IMR-90 (cell line): ENCODE measurements at regions of chr9 and their contacts with region 1.

Region 1: DNA sequence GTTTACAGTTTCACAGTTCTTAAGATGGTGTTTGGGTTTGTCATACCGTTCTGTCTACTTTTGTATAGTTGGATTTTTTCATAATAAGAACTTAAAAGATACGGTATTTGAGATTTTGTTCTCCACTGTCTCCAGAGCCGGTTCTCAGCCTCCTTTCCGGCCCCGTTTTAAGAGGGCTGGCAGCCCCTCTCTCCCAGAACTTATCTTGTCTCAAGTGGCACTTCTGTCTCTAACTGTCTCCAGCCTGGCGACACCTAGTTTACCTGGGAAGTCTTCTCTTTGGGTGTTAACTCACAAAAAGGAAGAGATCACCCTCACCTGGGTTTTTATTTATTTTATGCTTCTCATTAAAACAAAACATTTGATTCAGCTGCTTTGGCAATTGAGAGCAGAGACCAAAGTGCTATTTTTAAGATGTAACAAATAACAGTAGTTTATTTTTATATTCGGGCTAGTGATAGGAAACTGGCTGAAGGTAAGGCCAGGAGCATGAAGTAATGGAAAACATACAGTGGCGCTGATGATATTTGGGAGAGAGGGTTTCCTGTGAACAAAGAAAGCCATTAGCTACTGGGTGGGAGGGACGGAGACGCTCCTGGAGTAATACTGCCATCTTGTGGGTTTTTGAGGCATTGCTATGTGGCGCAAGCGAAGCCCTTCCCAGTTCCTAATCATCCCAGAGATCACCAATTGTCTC is 48.3 kb downstream of the ACER2 start:
- DNase-seq: peak; percentile 75
- ATAC-seq: peak; percentile 98
- H3K4me3 ChIP-seq: peak overlapping the region; percentile 24; the same call in 1 of the 2 replicates
- H3K27ac ChIP-seq: no peak overlapping the region
- H3K4me1 ChIP-seq: no peaks in the 10 kb centered on the region
- H3K27me3 ChIP-seq: 0 out of 2 replicates have a peak, but pooled peaks cover 2% of the 10 kb centered on the region
- CTCF ChIP-seq: peak; percentile 93
- POLR2A ChIP-seq: no peak
- RAD21 ChIP-seq: peak; percentile 94

Region 2: DNA sequence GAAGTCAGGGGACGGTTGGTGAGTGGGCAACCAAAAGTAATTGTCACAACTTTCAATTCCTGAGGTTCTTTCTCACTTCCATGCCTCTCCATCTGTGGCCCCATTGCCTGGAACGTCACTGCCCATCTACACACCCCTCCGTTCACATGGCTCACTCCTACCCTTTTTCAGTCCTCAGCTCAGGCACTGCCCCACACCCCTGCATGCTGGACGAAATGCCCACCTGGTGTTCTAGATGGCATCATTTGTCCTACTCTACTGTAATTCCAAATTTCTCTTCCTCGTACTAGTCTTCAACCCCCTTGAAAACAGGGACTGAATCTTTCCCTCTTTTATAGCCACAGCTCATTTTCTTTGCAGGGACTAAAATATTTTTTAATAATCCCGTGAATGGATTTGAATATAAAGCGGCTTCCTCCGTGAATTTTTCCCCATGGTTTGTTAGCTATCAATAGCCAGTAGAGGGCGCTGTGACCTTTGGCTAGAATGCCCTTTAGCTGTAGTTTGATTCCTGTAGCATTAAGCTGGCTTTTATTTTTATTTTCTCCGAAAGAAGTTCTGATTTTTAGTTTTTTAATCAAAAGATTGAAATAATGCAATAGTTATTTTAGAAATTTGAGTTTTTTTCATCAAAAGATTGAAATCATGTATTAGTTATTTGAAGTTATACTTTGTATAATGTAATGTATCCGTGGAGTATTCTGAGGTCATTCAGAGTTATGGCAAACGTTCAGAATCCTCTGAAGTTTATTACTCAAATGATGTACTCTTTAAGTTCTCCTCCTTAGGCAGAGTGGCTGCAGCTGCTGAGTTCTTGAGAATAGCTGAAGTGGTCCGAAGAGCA is 1646.2 kb before region 1 on chr9:
- CTCF ChIA-PET with region 1: no interaction called
- POLR2A ChIA-PET with region 1: no interaction called
- dilution Hi-C with region 1: no loop called
- in situ Hi-C with region 1: no loop called
- intact Hi-C with region 1: loop called (anchors 2 kb)
- DNase-seq: peak; percentile 66
- ATAC-seq: peak; percentile 87
- H3K4me3 ChIP-seq: no peak overlapping the region
- H3K27ac ChIP-seq: no peak overlapping the region
- H3K4me1 ChIP-seq: no peaks in the 10 kb centered on the region
- H3K27me3 ChIP-seq: peaks cover 3% of the 10 kb centered on the region
- CTCF ChIP-seq: peak; percentile 91
- POLR2A ChIP-seq: no peak
- RAD21 ChIP-seq: peak; percentile 91

Region 3: GRCh38 chr9:18442629-18443491 is 1014.3 kb before region 1 on chr9:
- CTCF ChIA-PET with region 1: no interaction called
- POLR2A ChIA-PET with region 1: no interaction called
- dilution Hi-C with region 1: no loop called
- in situ Hi-C with region 1: no loop called
- intact Hi-C with region 1: loop called (anchors 5 kb)
- DNase-seq: peak; percentile 87
- ATAC-seq: peak; percentile 71
- H3K4me3 ChIP-seq: no peak overlapping the region
- H3K27ac ChIP-seq: no peak overlapping the region
- H3K4me1 ChIP-seq: peaks cover 10% of the 10 kb centered on the region
- H3K27me3 ChIP-seq: no peaks in the 10 kb centered on the region
- CTCF ChIP-seq: peak; percentile 92
- POLR2A ChIP-seq: no peak
- RAD21 ChIP-seq: peak; percentile 79

Region 4: GRCh38 chr9:19048966-19049916 is 407.9 kb before region 1 on chr9 and contains the start of gene RRAGA:
- CTCF ChIA-PET with region 1: no interaction called
- POLR2A ChIA-PET with region 1: no interaction called
- dilution Hi-C with region 1: no loop called
- in situ Hi-C with region 1: no loop called
- intact Hi-C with region 1: loop called (anchors 1 kb)
- DNase-seq: peak; percentile 96
- ATAC-seq: peak; percentile 93
- H3K4me3 ChIP-seq: peak within 1 kb of the TSS; percentile 74
- H3K27ac ChIP-seq: peak within 1 kb of the TSS; percentile 96
- H3K4me1 ChIP-seq: peaks cover 2% of the 10 kb centered on the region; the same call in 1 of the 2 replicates
- H3K27me3 ChIP-seq: no peaks in the 10 kb centered on the region
- CTCF ChIP-seq: peak; percentile 89
- POLR2A ChIP-seq: peak; percentile 97
- RAD21 ChIP-seq: peak; percentile 62
- total RNA-seq, gene RRAGA: 63.3 and 74.7 TPM in 2 replicates

Region 5: GRCh38 chr9:19127881-19128500 is 329.2 kb before region 1 on chr9:
- CTCF ChIA-PET with region 1: no interaction called
- POLR2A ChIA-PET with region 1: no interaction called
- dilution Hi-C with region 1: no loop called
- in situ Hi-C with region 1: no loop called
- intact Hi-C with region 1: loop called (anchors 10 kb)
- DNase-seq: no peak
- ATAC-seq: peak; percentile 27
- H3K4me3 ChIP-seq: peak overlapping the region; percentile 65
- H3K27ac ChIP-seq: peak overlapping the region; percentile 72
- H3K4me1 ChIP-seq: peaks cover 16% of the 10 kb centered on the region
- H3K27me3 ChIP-seq: no peaks in the 10 kb centered on the region
- CTCF ChIP-seq: no peak
- POLR2A ChIP-seq: no peak
- RAD21 ChIP-seq: no peak

Region 6: GRCh38 chr9:19230356-19231125 is 226.6 kb before region 1 on chr9 and contains the start of gene DENND4C:
- CTCF ChIA-PET with region 1: no interaction called
- POLR2A ChIA-PET with region 1: no interaction called
- dilution Hi-C with region 1: no loop called
- in situ Hi-C with region 1: no loop called
- intact Hi-C with region 1: loop called (anchors 2 kb)
- DNase-seq: peak; percentile 78
- ATAC-seq: peak; percentile 92
- H3K4me3 ChIP-seq: peak within 1 kb of the TSS; percentile 97
- H3K27ac ChIP-seq: peak within 1 kb of the TSS; percentile 97
- H3K4me1 ChIP-seq: peaks cover 3% of the 10 kb centered on the region
- H3K27me3 ChIP-seq: no peaks in the 10 kb centered on the region
- CTCF ChIP-seq: peak; percentile 22; the same call in 1 of the 2 replicates
- POLR2A ChIP-seq: peak; percentile 81
- RAD21 ChIP-seq: no peak
- total RNA-seq, gene DENND4C: 32.6 and 48.0 TPM in 2 replicates

Region 7: DNA sequence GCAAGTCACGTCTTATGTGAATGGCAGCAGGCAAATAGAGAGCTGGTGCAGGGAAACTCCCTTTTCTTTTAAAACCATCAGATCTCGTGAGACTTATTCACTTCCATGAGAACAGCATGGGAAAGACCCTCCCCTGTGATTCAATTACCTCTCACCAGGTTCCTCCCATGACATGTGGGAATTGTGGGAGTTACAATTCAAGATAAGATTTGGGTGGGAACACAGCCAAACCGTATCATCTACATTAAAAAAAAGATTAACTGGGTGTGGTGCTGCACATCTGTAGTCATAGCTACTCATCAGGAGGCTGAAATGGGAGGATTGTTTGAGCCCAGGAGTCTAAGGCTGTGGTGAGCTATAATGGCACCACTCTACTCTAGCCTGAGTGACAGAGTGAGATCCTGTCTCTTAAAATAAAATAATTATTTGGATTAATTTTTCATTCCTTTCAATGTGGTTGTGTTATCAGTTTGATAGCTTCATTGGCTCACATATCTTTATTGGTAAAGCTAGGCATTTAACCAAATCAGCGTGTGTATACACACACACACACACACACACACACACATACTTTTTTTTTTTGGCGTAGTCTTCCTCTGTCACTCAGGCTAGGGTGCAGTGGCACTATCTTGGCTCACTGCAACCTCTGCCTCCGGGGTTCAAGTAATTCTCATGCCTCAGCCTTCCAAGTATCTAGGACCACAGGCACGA is 204.8 kb before region 1 on chr9:
- CTCF ChIA-PET with region 1: no interaction called
- POLR2A ChIA-PET with region 1: no interaction called
- dilution Hi-C with region 1: no loop called
- in situ Hi-C with region 1: no loop called
- intact Hi-C with region 1: no loop called
- DNase-seq: no peak
- ATAC-seq: no peak
- H3K4me3 ChIP-seq: no peak overlapping the region
- H3K27ac ChIP-seq: no peak overlapping the region
- H3K4me1 ChIP-seq: no peaks in the 10 kb centered on the region
- H3K27me3 ChIP-seq: no peaks in the 10 kb centered on the region
- CTCF ChIP-seq: no peak
- POLR2A ChIP-seq: no peak
- RAD21 ChIP-seq: no peak

Region 8: DNA sequence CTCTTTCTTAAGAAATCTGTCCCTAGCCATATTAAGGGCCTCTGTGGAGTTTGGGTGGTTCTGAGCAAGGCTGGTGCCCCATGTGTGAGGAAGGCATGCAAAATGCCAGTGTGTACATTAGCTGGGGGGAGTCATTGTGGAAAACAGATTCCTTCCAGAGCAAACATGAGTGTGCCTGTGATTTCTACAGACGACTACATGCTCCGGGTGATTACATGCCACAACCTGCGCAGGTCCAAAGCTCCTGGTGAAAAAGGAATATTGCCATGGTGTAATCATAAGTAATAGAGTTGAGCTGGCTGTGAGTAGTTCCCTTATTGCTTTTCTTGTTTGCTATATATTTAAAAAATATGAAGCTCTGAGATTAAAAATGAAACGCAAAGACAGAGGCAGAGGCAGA is 53.8 kb after region 1 on chr9:
- CTCF ChIA-PET with region 1: no interaction called
- POLR2A ChIA-PET with region 1: no interaction called
- dilution Hi-C with region 1: no loop called
- in situ Hi-C with region 1: no loop called
- intact Hi-C with region 1: no loop called
- DNase-seq: no peak
- ATAC-seq: no peak
- H3K4me3 ChIP-seq: no peak overlapping the region
- H3K27ac ChIP-seq: no peak overlapping the region
- H3K4me1 ChIP-seq: no peaks in the 10 kb centered on the region
- H3K27me3 ChIP-seq: 0 out of 2 replicates have a peak, but pooled peaks cover 2% of the 10 kb centered on the region
- CTCF ChIP-seq: no peak
- POLR2A ChIP-seq: no peak
- RAD21 ChIP-seq: no peak

Region 9: DNA sequence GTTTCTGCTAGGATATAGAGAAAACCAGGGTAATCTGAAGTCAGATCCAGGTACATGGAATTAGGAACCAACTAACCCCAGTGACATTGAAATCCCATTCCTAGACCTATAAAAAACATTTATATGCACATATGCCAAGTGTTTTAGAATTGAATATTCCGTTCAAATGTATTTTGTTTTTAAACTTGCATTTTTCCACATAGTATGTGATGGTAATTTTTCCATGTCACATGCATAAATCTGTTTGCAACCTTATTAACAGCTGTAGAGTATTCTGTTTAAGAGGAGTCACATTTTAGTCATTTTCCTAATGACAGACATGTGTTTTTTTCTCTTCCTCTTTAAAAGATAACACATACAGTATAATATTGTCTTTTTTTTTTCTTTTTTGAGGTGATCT is 1277.1 kb after region 1 on chr9:
- CTCF ChIA-PET with region 1: interaction called, 10 read pairs
- POLR2A ChIA-PET with region 1: no interaction called
- dilution Hi-C with region 1: no loop called
- in situ Hi-C with region 1: no loop called
- intact Hi-C with region 1: no loop called
- DNase-seq: no peak
- ATAC-seq: no peak
- H3K4me3 ChIP-seq: no peak overlapping the region
- H3K27ac ChIP-seq: no peak overlapping the region
- H3K4me1 ChIP-seq: no peaks in the 10 kb centered on the region; the same call in 1 of the 2 replicates
- H3K27me3 ChIP-seq: no peaks in the 10 kb centered on the region
- CTCF ChIP-seq: no peak
- POLR2A ChIP-seq: no peak
- RAD21 ChIP-seq: no peak